Activated T-helper 1 cell treated with anti-CD3 and anti-CD28 coated beads, Interleukin-12 subunit alpha, Interleukin-12 subunit beta, Interleukin-2, Interleukin-4 antibody, amounts not matched to agents 30 ng/mL and 10 ng/mL and 1 ng/mL, durations not matched to agents 14 hours and 24 hours and 36 hours (primary cell): ENCODE measurements at regions of chr10 and their contacts with region 1.

Region 1: GRCh38 chr10:95445837-95446486 is 115.2 kb downstream of the SORBS1 start:
- DNase-seq: peak; percentile 4
- H3K4me3 Mint-ChIP-seq: no peak overlapping the region
- H3K27ac Mint-ChIP-seq: no peak overlapping the region
- H3K4me1 Mint-ChIP-seq: peaks cover 4% of the 10 kb centered on the region
- H3K27me3 Mint-ChIP-seq: peaks cover 20% of the 10 kb centered on the region

Region 2: GRCh38 chr10:95133016-95133752 is 312.8 kb before region 1 on chr10:
- intact Hi-C with region 1: loop called (anchors 5 kb)
- DNase-seq: peak; percentile 60
- H3K4me3 Mint-ChIP-seq: no peak overlapping the region
- H3K27ac Mint-ChIP-seq: no peak overlapping the region
- H3K4me1 Mint-ChIP-seq: no peaks in the 10 kb centered on the region
- H3K27me3 Mint-ChIP-seq: peaks cover 4% of the 10 kb centered on the region

Region 3: DNA sequence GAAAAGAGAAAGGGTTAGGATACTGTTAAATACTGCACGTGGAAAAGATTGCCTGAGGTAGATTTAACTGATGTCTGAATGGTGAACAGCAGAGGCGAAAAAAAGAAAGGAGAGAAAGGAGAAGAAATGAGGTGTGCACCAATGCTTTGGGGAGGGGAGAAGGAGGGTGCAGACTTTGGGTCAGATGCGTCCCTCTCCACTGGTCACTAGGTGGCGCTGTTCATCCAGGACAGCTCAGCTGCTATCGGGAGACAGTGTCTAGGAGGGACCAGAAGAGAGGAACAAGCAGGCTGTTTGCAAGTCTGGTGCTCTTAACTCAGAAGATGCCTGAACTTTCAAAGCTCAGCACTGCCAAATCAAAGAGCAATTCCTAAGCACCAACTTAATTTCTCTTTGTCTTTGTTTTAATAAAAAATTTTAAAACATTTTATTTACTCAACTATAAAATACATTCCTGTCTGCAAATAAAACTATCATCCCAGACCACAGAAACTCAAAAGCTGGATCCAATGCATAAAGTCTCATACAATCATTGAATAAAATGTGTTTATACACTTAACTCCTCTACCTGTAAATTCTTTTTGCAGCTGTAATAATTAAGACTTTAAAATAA is 71.3 kb before region 1 on chr10:
- intact Hi-C with region 1: loop called (anchors 1 kb)
- DNase-seq: peak; percentile 59
- H3K4me3 Mint-ChIP-seq: no peak overlapping the region
- H3K27ac Mint-ChIP-seq: no peak overlapping the region
- H3K4me1 Mint-ChIP-seq: peaks cover 14% of the 10 kb centered on the region
- H3K27me3 Mint-ChIP-seq: peaks cover 9% of the 10 kb centered on the region

Region 4: GRCh38 chr10:95430231-95430951 is 15.6 kb before region 1 on chr10:
- intact Hi-C with region 1: loop called (anchors 1 kb)
- DNase-seq: peak; percentile 23
- H3K4me3 Mint-ChIP-seq: no peak overlapping the region
- H3K27ac Mint-ChIP-seq: no peak overlapping the region
- H3K4me1 Mint-ChIP-seq: no peaks in the 10 kb centered on the region
- H3K27me3 Mint-ChIP-seq: peaks cover 6% of the 10 kb centered on the region

Region 5: GRCh38 chr10:95792874-95793285 is 346.9 kb after region 1 on chr10:
- intact Hi-C with region 1: no loop called
- DNase-seq: no peak
- H3K4me3 Mint-ChIP-seq: no peak overlapping the region
- H3K27ac Mint-ChIP-seq: peak overlapping the region; percentile 95
- H3K4me1 Mint-ChIP-seq: peaks cover 88% of the 10 kb centered on the region
- H3K27me3 Mint-ChIP-seq: peaks cover under 1% of the 10 kb centered on the region